Endothelial cell of umbilical vein (primary cell): ENCODE measurements at regions of chr13 and their contacts with region 1.

Region 1: GRCh38 chr13:48782429-48782840 is 128.7 kb downstream of the CYSLTR2 start:
- DNase-seq: no peak
- H3K4me3 ChIP-seq: no peak overlapping the region
- H3K27ac ChIP-seq: no peak overlapping the region
- H3K4me1 ChIP-seq: no peaks in the 10 kb centered on the region
- H3K27me3 ChIP-seq: peaks cover 2 to 6% of the 10 kb centered on the region in 2 experiments
- CTCF ChIP-seq: no peak
- POLR2A ChIP-seq: no peak

Region 2: DNA sequence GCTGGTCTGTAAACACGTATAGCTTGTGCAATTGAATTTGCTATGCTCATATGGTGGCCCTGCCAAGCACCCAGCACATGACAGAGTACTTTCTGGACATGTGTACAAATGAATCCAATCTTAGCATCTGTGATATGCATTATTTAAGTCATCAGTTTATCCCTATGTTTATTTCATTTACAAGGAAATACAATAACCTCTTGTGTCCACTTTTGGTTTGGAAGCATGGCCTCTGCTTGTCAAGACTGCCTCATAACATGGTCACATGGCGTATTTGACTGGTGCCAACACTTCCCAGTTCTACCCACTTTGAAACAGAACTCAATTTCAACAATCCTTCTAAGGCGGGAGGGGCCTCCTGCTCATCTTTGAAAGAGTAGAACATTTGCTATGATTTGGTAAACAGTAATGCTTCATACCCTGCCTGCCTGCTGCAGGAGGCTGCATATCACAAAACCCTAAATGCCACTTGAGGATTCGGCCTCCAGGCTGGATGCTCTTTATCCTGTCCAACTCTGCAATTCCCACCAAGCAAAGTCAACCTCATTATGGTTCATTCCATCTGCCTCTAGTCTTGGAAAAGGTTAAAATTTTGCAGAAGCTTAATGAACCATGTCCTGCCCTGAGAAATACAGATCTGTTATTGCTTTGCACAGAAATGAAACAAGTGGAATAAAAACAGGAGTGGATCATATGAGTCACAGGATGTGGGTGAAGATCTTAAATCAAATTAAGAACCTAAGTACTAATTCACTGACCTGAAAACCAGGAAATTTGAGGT is 22.6 kb after region 1 on chr13:
- CTCF ChIA-PET with region 1: no interaction called
- POLR2A ChIA-PET with region 1: no interaction called
- dilution Hi-C with region 1: no loop called
- intact Hi-C with region 1: loop called (anchors 1 kb)
- DNase-seq: peak; percentile 12
- H3K4me3 ChIP-seq: no peak overlapping the region
- H3K27ac ChIP-seq: no peak overlapping the region
- H3K4me1 ChIP-seq: no peaks in the 10 kb centered on the region
- H3K27me3 ChIP-seq: no peaks in the 10 kb centered on the region
- CTCF ChIP-seq: no peak
- POLR2A ChIP-seq: no peak